ENCODE measurements at regions of chr1 and their contacts with region 1.

Region 1: GRCh38 chr1:109099938-109100773 is 9.6 kb downstream of the TMEM167B start:
- DNase-seq: peak; percentile 89 to 99 (median 96)
- ATAC-seq: peak; percentile 87 to 90
- H3K4me3 Mint-ChIP-seq: peak overlapping the region; percentile 91 to 99 (median 96)
- H3K27ac Mint-ChIP-seq: peak overlapping the region; percentile 96 to 99 (median 98)
- H3K4me1 Mint-ChIP-seq: peaks cover 6 to 30% (median 14%) of the 10 kb centered on the region in 4 donors
- H3K27me3 Mint-ChIP-seq: peaks cover 0 to 3% (median 0%) of the 10 kb centered on the region in 5 donors

Region 2: GRCh38 chr1:108643492-108644335 is 456.4 kb before region 1 on chr1:
- POLR2A ChIA-PET with region 1: interaction called, 15 read pairs
- DNase-seq: peak in 9 of 10 donors; percentile 31 to 80 (median 60)
- ATAC-seq: peak; percentile 17 to 24
- H3K4me3 Mint-ChIP-seq: peak overlapping the region in 8 of 10 donors; percentile 12 to 84 (median 48)
- H3K27ac Mint-ChIP-seq: peak overlapping the region; percentile 34 to 100 (median 99)
- H3K4me1 Mint-ChIP-seq: peaks cover 48 to 83% (median 80%) of the 10 kb centered on the region in 4 donors
- H3K27me3 Mint-ChIP-seq: no peaks in the 10 kb centered on the region

Region 3: DNA sequence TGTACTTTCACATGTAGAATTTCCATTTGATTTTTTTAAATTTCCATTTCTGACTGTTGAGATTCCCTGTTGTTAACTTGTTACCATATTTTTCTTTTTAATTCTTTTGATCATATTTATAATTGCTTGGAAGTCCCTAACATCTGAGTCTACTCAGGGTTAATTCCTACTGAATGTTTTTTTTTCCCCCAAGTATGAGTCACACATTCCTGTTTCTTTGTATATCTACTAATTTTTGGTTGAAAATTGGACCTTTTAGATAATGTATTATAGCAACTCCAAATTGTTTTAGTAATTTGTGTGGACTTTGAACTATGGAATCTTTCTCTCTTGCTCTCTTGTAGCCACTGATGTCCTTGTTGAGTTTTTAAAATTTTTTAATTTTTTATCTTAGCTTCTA is 299.1 kb before region 1 on chr1:
- POLR2A ChIA-PET with region 1: no interaction called
- DNase-seq: no peak
- ATAC-seq: no peak
- H3K4me3 Mint-ChIP-seq: no peak overlapping the region
- H3K27ac Mint-ChIP-seq: peak overlapping the region in 6 of 10 donors; percentile 1 to 60 (median 34)
- H3K4me1 Mint-ChIP-seq: peaks cover 0 to 4% (median under 1%) of the 10 kb centered on the region in 4 donors
- H3K27me3 Mint-ChIP-seq: no peaks in the 10 kb centered on the region

Region 4: GRCh38 chr1:109075531-109076490 is 24.3 kb before region 1 on chr1 and contains the start of gene TAF13:
- POLR2A ChIA-PET with region 1: interaction called, 103 read pairs
- DNase-seq: peak; percentile 74 to 93 (median 85)
- ATAC-seq: peak; percentile 96 to 98
- H3K4me3 Mint-ChIP-seq: peak within 1 kb of the TSS; percentile 96 to 100 (median 98)
- H3K27ac Mint-ChIP-seq: peak within 1 kb of the TSS; percentile 98 to 100 (median 99)
- H3K4me1 Mint-ChIP-seq: peaks cover 8 to 29% (median 20%) of the 10 kb centered on the region in 4 donors
- H3K27me3 Mint-ChIP-seq: no peaks in the 10 kb centered on the region
- polyA plus RNA-seq, gene TAF13: 1.5 to 1.7 (median 1.7) TPM

Region 5: GRCh38 chr1:109191377-109191776 is 91.2 kb after region 1 on chr1:
- POLR2A ChIA-PET with region 1: no interaction called
- DNase-seq: no peak
- ATAC-seq: no peak
- H3K4me3 Mint-ChIP-seq: no peak overlapping the region
- H3K27ac Mint-ChIP-seq: no peak overlapping the region
- H3K4me1 Mint-ChIP-seq: peaks cover 0 to 10% (median 5%) of the 10 kb centered on the region in 4 donors
- H3K27me3 Mint-ChIP-seq: no peaks in the 10 kb centered on the region

Region 6: GRCh38 chr1:109213785-109214468 is 113.8 kb after region 1 on chr1 and contains the start of gene SARS1:
- POLR2A ChIA-PET with region 1: interaction called, 27 read pairs
- DNase-seq: peak; percentile 73 to 94 (median 88)
- ATAC-seq: peak; percentile 89
- H3K4me3 Mint-ChIP-seq: peak within 1 kb of the TSS; percentile 93 to 100 (median 99)
- H3K27ac Mint-ChIP-seq: peak within 1 kb of the TSS; percentile 92 to 99 (median 97)
- H3K4me1 Mint-ChIP-seq: peaks cover 24 to 44% (median 38%) of the 10 kb centered on the region in 4 donors
- H3K27me3 Mint-ChIP-seq: peaks cover 0 to 3% (median 0%) of the 10 kb centered on the region in 5 donors
- polyA plus RNA-seq, gene SARS1: 117 to 154 (median 127) TPM

Region 7: DNA sequence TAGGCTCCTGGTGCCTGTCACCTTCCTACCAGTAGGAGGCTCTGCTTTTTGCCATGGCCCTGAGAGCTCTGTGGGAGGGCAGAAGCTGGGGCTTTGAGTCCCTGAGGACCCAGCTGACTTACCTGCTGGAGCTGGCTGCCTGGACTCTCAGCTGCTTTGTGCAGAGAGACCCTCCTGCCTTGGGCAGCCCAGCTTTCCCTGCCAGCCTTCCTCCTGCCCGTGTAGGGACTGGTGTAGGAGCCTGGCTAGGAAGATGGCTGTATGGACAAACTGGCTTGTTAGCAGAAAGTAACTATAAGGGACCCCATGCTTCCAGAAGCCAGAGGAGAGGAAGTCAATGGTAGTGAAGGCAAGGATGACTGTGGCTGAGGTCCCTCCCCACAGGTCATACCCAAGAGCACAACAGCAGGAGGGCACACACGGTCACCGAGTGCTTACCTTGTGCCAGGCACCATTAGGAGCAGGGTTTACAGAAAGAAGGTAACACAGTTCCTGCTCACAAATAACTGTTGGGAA is 139.5 kb after region 1 on chr1:
- POLR2A ChIA-PET with region 1: no interaction called
- DNase-seq: peak in 3 of 10 donors; percentile 11 to 27 (median 26)
- ATAC-seq: peak; percentile 79 to 85
- H3K4me3 Mint-ChIP-seq: no peak overlapping the region
- H3K27ac Mint-ChIP-seq: peak overlapping the region; percentile 20 to 89 (median 64)
- H3K4me1 Mint-ChIP-seq: peaks cover 22 to 26% (median 24%) of the 10 kb centered on the region in 4 donors
- H3K27me3 Mint-ChIP-seq: peaks cover 0 to 8% (median 6%) of the 10 kb centered on the region in 5 donors

Region 8: DNA sequence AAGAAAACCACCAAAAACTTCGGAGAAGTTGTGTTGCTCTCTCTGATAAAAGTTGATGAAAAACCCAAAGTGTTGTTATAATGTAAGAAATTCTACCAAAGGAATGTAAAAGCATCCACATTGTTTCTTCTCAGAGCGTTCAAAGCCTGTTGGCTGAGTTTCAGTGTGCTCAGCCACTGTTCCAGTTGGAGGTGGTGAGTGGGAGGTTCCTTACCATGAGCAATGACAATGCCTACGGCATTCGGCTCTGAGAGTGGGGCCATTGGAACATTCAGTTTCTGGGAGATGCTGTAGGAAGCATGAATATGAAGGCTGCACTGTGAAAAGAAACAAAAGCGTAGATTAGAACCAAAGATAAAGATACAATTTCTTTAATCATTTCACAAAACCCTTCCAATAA is 227.1 kb after region 1 on chr1:
- POLR2A ChIA-PET with region 1: no interaction called
- DNase-seq: no peak
- ATAC-seq: no peak
- H3K4me3 Mint-ChIP-seq: no peak overlapping the region
- H3K27ac Mint-ChIP-seq: no peak overlapping the region
- H3K4me1 Mint-ChIP-seq: no peaks in the 10 kb centered on the region
- H3K27me3 Mint-ChIP-seq: no peaks in the 10 kb centered on the region

Region 9: GRCh38 chr1:109483672-109484518 is 383.7 kb after region 1 on chr1 and contains the start of gene ATXN7L2:
- POLR2A ChIA-PET with region 1: interaction called, 12 read pairs
- DNase-seq: peak; percentile 90 to 96 (median 94)
- ATAC-seq: peak; percentile 79 to 80
- H3K4me3 Mint-ChIP-seq: peak within 1 kb of the TSS; percentile 88 to 99 (median 96)
- H3K27ac Mint-ChIP-seq: peak within 1 kb of the TSS; percentile 87 to 96 (median 94)
- H3K4me1 Mint-ChIP-seq: peaks cover 22 to 44% (median 36%) of the 10 kb centered on the region in 4 donors
- H3K27me3 Mint-ChIP-seq: peaks cover 0 to 11% (median 6%) of the 10 kb centered on the region in 5 donors
- polyA plus RNA-seq, gene ATXN7L2: 4.3 to 10.7 (median 8.6) TPM